Activated CD4-positive, alpha-beta T cell treated with anti-CD3 and anti-CD28 coated beads for 36 hours (primary cell): ENCODE measurements at regions of chr18 and their contacts with region 1.

Region 1: DNA sequence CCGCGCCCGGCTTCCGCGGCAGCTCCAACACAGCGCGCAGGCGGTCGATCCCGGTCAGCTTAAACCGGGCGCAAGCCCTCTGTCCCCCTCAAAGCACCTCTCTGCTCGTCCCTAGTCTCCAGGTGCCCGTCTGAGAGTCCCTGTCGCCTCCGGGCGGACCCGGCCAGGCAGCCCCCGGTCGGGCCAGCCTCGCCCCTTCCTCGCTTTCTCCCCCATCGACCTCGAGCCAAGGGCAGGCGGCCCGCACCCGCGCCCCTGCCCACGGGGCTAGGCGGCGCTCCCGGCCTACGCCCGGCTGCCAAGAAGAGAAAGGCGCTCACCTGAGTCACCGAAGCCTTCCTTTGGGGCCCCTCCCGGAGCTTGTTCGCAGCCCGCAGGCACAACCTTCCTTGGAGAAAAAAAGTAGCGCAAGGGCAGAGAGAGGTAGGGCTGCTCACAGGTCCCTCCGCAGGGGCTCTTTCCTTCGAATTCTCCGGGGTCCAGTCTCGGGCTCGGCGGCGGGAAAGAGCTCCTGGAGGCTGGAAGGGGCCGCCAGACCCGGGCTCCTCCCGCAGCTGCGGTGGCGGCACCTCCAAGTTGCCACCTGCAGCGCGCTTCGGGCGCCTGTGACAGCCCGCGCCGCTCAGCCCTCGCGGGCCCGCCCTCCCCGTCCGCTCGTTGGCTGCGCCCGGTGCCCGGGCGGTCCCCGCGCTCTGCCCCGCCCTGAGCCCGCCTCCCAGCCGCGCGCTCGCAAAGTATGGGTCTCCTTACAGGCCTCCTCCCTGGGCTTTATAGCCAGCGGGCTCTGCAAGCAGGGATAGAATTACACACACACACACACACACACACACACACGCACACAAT is 86.5 kb upstream of the EPB41L3 start:
- DNase-seq: peak; percentile 78
- ATAC-seq: peak; percentile 93
- H3K4me3 Mint-ChIP-seq: peak overlapping the region; percentile 69
- H3K27ac Mint-ChIP-seq: no peak overlapping the region
- H3K4me1 Mint-ChIP-seq: peaks cover 4% of the 10 kb centered on the region
- H3K27me3 Mint-ChIP-seq: peaks cover 31% of the 10 kb centered on the region

Region 2: GRCh38 chr18:5295981-5296705 is 334.1 kb before region 1 on chr18:
- CTCF ChIA-PET with region 1: no interaction called
- POLR2A ChIA-PET with region 1: no interaction called
- intact Hi-C with region 1: loop called in 1 of 2 experiments (anchors 1 kb)
- DNase-seq: peak; percentile 96
- ATAC-seq: peak; percentile 64
- H3K4me3 Mint-ChIP-seq: peak overlapping the region; percentile 89
- H3K27ac Mint-ChIP-seq: peak overlapping the region; percentile 98
- H3K4me1 Mint-ChIP-seq: peaks cover 34% of the 10 kb centered on the region
- H3K27me3 Mint-ChIP-seq: peaks cover under 1% of the 10 kb centered on the region

Region 3: DNA sequence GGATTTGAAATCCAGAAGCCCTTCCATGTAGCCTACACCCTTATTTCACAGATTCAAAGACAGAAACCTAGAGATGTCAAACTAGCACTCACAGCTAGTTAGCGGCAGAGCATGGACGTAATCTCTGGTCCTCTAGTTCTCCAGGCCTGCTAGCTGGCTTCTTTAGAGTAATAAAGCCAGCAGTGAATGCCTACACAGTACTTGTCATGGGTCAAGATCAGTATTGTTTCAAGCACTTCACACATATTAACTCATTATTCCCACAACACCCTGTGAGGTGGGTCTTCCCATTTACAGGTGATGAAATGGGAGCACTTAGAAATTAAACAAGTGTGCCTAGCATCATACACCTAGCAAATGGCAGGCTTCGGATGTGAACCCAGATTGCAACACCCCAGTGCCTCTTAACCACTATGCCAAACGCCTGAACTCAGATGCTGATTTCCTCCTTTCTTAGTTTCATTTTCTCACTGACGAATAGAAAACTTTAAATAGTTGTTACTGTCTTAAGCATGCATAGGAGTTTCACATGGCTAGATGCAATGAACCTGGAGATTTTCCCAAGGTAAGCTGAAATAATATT is 320.3 kb before region 1 on chr18:
- CTCF ChIA-PET with region 1: no interaction called
- POLR2A ChIA-PET with region 1: no interaction called
- intact Hi-C with region 1: loop called in 1 of 2 experiments (anchors 5 kb)
- DNase-seq: peak; percentile 56
- ATAC-seq: peak; percentile 96
- H3K4me3 Mint-ChIP-seq: peak overlapping the region; percentile 66
- H3K27ac Mint-ChIP-seq: peak overlapping the region; percentile 80
- H3K4me1 Mint-ChIP-seq: peaks cover 22% of the 10 kb centered on the region
- H3K27me3 Mint-ChIP-seq: no peaks in the 10 kb centered on the region

Region 4: GRCh38 chr18:5393779-5394178 is 236.5 kb before region 1 on chr18:
- CTCF ChIA-PET with region 1: no interaction called
- POLR2A ChIA-PET with region 1: no interaction called
- intact Hi-C with region 1: no loop called
- DNase-seq: no peak
- ATAC-seq: no peak
- H3K4me3 Mint-ChIP-seq: no peak overlapping the region
- H3K27ac Mint-ChIP-seq: no peak overlapping the region
- H3K4me1 Mint-ChIP-seq: peaks cover 5% of the 10 kb centered on the region
- H3K27me3 Mint-ChIP-seq: peaks cover 2% of the 10 kb centered on the region

Region 5: DNA sequence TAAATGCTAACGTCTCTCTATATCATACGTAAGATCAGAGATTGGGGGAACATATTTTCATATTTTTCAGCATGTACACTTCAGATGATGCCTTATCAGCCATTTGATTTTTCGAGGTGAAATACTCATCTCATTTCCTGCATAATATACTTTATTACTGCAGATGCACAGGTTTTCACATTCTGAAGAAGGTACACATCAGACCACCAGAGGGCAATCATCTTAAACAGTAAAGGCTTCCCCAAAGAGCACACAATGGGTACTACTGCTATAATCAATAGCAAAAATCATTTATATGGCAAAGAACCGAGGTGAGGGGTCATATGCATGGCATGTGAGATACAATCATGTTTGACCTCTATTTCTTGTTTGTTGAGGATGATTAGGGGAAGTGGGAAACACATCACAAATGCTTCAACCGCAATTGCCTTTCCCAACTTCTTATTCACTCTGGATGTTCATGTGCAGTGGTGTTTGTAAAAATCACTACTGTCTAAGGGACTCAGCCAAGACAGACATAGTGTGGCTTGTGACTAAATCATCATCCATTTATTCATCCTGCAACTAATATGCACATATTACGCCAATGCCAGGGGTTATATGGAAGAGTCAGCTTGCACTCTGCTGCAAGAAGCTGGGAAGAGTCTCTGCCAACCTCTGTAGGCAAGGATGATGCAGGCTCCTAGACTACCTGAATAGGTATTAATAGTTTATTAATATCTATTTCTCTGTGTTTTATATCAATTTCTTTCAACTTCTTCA is 205.2 kb before region 1 on chr18:
- CTCF ChIA-PET with region 1: no interaction called
- POLR2A ChIA-PET with region 1: no interaction called
- intact Hi-C with region 1: loop called in 1 of 2 experiments (anchors 10 kb)
- DNase-seq: no peak
- ATAC-seq: peak; percentile 49
- H3K4me3 Mint-ChIP-seq: no peak overlapping the region
- H3K27ac Mint-ChIP-seq: no peak overlapping the region
- H3K4me1 Mint-ChIP-seq: peaks cover 4% of the 10 kb centered on the region
- H3K27me3 Mint-ChIP-seq: peaks cover 2% of the 10 kb centered on the region

Region 6: GRCh38 chr18:5456577-5457463 is 173.5 kb before region 1 on chr18:
- CTCF ChIA-PET with region 1: no interaction called
- POLR2A ChIA-PET with region 1: no interaction called
- intact Hi-C with region 1: loop called in 1 of 2 experiments (anchors 5 kb)
- DNase-seq: peak; percentile 41
- ATAC-seq: peak; percentile 73
- H3K4me3 Mint-ChIP-seq: peak overlapping the region; percentile 62
- H3K27ac Mint-ChIP-seq: peak overlapping the region; percentile 84
- H3K4me1 Mint-ChIP-seq: peaks cover 22% of the 10 kb centered on the region
- H3K27me3 Mint-ChIP-seq: no peaks in the 10 kb centered on the region

Region 7: DNA sequence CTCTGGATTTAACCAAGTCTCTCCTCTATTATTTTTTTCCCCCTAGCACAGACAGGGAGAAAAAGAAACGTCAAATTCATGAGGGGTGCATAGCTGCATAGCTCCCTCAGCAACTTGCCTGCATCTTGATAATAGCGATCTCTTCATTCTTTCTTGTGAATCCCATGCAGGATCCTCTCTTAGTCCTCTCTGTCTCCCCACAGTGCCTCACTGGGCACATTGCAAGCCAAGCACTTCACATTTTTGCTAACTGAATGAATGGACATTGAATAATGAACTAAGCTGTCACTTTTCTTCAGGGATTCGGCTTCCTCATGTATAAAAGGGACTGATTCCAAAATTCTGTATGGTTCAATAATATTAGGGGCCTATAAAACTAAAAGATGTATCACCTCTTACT is 83.6 kb before region 1 on chr18:
- CTCF ChIA-PET with region 1: no interaction called
- POLR2A ChIA-PET with region 1: no interaction called
- intact Hi-C with region 1: loop called in 1 of 2 experiments (anchors 2 kb)
- DNase-seq: peak; percentile 20
- ATAC-seq: peak; percentile 50
- H3K4me3 Mint-ChIP-seq: no peak overlapping the region
- H3K27ac Mint-ChIP-seq: no peak overlapping the region
- H3K4me1 Mint-ChIP-seq: peaks cover 3% of the 10 kb centered on the region
- H3K27me3 Mint-ChIP-seq: peaks cover 27% of the 10 kb centered on the region

Region 8: DNA sequence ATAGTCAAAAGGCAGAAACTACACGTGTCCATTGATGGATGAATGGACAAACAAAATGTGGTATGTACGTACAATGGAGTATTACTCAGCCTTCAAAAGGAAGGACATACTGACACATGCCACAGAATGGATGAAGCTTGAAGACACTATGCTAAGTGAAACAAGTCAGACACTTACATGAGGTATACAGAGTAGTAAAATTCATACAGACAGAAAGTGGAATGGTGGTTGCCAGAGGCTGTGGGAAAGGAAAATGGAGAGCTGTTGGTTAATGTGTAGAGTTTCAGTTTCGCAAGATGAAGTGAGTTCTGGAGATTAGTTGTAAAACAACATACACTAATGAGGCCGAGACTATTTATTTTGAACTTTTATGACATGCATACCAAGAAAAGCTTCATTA is 19.1 kb before region 1 on chr18:
- CTCF ChIA-PET with region 1: no interaction called
- POLR2A ChIA-PET with region 1: no interaction called
- intact Hi-C with region 1: no loop called
- DNase-seq: no peak
- ATAC-seq: no peak
- H3K4me3 Mint-ChIP-seq: no peak overlapping the region
- H3K27ac Mint-ChIP-seq: no peak overlapping the region
- H3K4me1 Mint-ChIP-seq: no peaks in the 10 kb centered on the region
- H3K27me3 Mint-ChIP-seq: peaks cover 5% of the 10 kb centered on the region